ENCODE measurements at regions of chr19 and their contacts with region 1.

Region 1: GRCh38 chr19:4951656-4952055 is 17.3 kb upstream of the KDM4B start:
- DNase-seq: no peak
- H3K4me3 ChIP-seq: no peak overlapping the region
- H3K27ac ChIP-seq: no peak overlapping the region
- H3K4me1 ChIP-seq: no peaks in the 10 kb centered on the region
- H3K27me3 ChIP-seq: no peaks in the 10 kb centered on the region
- CTCF ChIP-seq: no peak
- POLR2A ChIP-seq: no peak

Region 2: GRCh38 chr19:6610934-6611852 is 1659.5 kb after region 1 on chr19:
- intact Hi-C with region 1: loop called (anchors 10 kb)
- DNase-seq: no peak
- H3K4me3 ChIP-seq: no peak overlapping the region
- H3K27ac ChIP-seq: no peak overlapping the region
- H3K4me1 ChIP-seq: no peaks in the 10 kb centered on the region
- H3K27me3 ChIP-seq: peaks cover 0 to 13% of the 10 kb centered on the region in 2 donors
- CTCF ChIP-seq: no peak
- POLR2A ChIP-seq: no peak